Cardiac septum (tissue), 1 donor: ENCODE measurements at regions of chr7 and their contacts with region 1.

Region 1: DNA sequence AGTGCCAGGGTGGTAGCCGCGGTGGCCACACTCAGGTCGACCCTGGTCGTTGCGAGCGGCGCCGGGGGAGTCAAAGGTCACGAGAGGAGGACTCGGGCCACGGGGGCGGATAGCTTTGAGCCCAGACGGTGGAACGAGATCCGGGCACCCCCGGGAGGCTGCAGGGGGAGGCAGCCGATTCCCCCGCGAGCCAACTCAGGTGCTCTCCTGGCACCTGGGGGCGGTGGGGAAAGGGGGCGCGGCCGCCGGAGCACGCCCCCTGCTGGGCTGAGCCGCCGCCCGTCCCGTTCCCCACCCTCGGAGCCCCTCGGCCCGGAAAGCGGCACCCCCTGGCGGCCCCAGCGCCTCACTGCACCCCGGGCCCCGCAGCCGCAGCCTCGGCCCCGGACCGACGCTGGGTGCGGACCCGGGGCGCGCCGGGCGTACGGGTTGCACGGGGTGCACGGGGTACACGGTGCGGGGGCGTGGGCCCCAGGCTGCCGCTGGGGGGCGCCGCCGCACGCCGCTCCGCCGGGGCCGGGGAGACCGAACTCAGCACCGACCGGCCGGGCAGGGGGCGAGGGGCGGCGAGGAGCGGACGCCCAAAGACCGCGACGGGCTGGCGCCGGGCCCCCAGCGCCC is 516 bp upstream of the NYAP1 start:
- DNase-seq: peak; percentile 88

Region 2: DNA sequence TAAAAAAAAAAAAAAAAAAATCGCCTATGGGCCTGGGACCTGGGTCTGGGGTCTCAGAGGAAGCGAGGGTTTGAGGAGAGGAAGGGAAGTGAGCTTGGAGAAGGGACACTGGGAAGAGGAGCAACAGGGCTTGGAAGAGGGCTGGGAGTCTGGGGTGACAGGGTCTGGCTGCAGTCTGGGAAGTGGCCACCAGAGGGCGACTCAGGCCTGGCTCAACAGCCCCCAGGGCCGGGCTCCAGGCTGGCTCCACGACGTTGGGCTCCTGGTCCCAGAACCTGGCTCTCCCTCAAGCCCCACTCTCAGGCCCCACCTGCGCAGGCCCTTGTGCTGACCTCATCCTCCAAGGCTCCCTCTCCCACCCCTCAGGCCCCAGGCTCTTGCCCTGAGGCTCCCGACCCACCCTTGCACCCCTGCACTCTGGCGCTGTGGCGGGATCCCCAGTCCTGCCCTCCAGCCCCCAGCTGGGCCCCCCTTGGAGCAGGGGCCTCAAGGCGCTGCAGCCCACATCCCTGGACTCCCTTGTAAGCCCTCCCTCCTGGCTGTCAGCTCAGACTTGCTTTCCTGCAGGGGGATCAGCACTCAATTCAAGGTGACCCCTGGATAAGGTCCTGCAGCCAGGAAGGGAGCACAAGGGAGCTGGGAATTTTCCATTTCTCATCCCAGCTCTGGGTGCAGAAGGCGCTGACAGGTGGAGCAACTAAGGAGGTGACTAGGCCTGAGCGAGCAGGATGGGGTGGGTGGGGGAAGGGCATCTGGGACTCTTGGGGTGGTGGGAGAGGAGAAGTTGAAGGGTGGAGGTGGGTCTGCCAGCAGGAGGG is 13.8 kb before region 1 on chr7:
- intact Hi-C with region 1: loop called (anchors 2 kb)
- DNase-seq: peak; percentile 94

Region 3: GRCh38 chr7:100545360-100546128 is 62.3 kb after region 1 on chr7:
- intact Hi-C with region 1: loop called (anchors 5 kb)
- DNase-seq: no peak

Region 4: DNA sequence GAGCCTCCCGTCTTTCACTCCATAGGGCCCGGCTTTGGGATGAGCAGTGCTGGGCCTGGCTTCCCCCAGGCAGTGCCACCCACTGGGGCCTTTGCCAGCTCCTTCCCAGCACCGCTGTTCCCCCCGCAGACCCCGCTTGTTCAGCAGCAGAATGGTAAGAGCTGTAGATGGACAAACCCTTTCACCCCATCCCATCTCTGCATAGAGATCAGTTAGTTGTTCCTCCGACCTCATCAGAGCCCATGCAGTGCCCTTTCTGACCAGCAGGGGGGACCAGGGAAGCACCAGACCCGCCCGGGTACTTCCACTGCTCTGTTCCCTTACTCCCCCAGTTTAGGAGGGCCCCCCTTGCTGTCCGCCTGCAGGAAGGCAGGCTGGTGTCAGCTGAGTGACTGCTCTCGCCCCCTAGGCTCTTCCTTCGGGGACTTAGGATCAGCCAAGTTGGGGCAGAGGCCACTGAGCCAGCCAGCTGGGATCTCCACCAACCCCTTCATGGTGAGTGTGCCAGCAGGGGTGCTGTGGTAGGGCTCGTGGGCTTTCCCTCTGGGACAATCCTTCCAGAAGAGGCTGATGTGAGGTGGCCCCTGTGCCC is 80.7 kb after region 1 on chr7:
- intact Hi-C with region 1: loop called (anchors 1 kb)
- DNase-seq: peak; percentile 91